ENCODE measurements at regions of chr12 and their contacts with region 1.

Region 1: GRCh38 chr12:45215419-45216229 is at the start of gene ANO6:
- DNase-seq: peak; percentile 75 to 87 (median 78)
- H3K4me3 ChIP-seq: peak within 1 kb of the TSS; percentile 74 to 94 (median 92)
- H3K4me3 Mint-ChIP-seq: peak within 1 kb of the TSS; percentile 99
- H3K27ac ChIP-seq: peak within 1 kb of the TSS; percentile 73 to 89
- H3K27ac Mint-ChIP-seq: peak within 1 kb of the TSS; percentile 87 to 96 (median 94)
- H3K4me1 ChIP-seq: peaks cover 36 to 44% of the 10 kb centered on the region in 2 donors
- H3K4me1 Mint-ChIP-seq: peaks cover 58% of the 10 kb centered on the region
- H3K27me3 ChIP-seq: no peaks in the 10 kb centered on the region
- H3K27me3 Mint-ChIP-seq: peaks cover 0 to 5% (median 2%) of the 10 kb centered on the region in 3 donors
- CTCF ChIP-seq: peak; percentile 23
- polyA plus RNA-seq, gene ANO6: 20.2 to 48.7 (median 34.1) TPM

Region 2: GRCh38 chr12:45166056-45166455 is 49.6 kb before region 1 on chr12:
- intact Hi-C with region 1: loop called in 1 of 2 experiments (anchors 10 kb)
- DNase-seq: no peak
- H3K4me3 ChIP-seq: no peak overlapping the region
- H3K4me3 Mint-ChIP-seq: no peak overlapping the region
- H3K27ac ChIP-seq: no peak overlapping the region
- H3K27ac Mint-ChIP-seq: no peak overlapping the region
- H3K4me1 ChIP-seq: no peaks in the 10 kb centered on the region
- H3K4me1 Mint-ChIP-seq: peaks cover 7% of the 10 kb centered on the region
- H3K27me3 ChIP-seq: no peaks in the 10 kb centered on the region
- H3K27me3 Mint-ChIP-seq: peaks cover 2 to 8% (median 4%) of the 10 kb centered on the region in 3 donors
- CTCF ChIP-seq: no peak

Region 3: GRCh38 chr12:45183246-45183645 is 32.4 kb before region 1 on chr12:
- intact Hi-C with region 1: loop called (anchors 5 kb)
- DNase-seq: no peak
- H3K4me3 ChIP-seq: no peak overlapping the region
- H3K4me3 Mint-ChIP-seq: no peak overlapping the region
- H3K27ac ChIP-seq: no peak overlapping the region
- H3K27ac Mint-ChIP-seq: no peak overlapping the region
- H3K4me1 ChIP-seq: peaks cover 32 to 34% of the 10 kb centered on the region in 2 donors
- H3K4me1 Mint-ChIP-seq: peaks cover 39% of the 10 kb centered on the region
- H3K27me3 ChIP-seq: no peaks in the 10 kb centered on the region
- H3K27me3 Mint-ChIP-seq: peaks cover 0 to 3% (median 0%) of the 10 kb centered on the region in 3 donors
- CTCF ChIP-seq: peak; percentile 37

Region 4: DNA sequence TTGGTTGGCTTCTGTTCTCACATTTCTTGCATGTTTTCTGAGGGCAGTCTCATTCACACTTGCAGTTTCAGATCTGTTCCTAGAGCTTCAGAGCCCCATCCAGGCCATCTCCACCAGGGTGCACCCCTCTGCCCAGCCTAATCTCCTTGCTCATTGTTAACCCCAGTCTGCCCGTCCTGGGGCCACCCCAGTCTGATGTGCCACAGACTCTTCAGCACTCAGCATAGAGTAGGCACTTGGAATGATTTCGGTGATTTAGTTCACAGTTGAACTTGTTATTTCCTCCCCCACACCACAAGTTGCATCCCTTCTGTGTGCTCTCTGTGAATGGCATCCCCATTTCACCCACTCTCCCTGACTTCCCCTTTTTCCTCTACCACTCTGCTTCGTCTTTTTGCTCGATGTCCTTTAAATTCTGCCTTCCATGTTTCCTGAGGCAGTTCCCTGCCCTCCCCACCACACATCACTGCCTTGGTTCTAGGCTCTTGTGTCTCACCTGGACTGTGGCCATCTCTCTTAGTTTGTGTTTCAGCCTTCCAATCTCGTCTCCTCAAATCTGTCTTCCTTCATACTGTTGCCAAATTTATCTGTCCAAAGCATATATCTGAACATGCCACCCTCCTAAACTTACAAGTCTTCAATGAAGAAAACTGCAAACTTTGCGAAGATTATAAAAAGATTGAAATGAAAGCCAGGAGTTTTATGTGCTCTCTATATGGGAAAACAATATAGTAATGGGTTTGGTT is 41.7 kb after region 1 on chr12:
- intact Hi-C with region 1: loop called in 1 of 2 experiments (anchors 5 kb)
- DNase-seq: peak; percentile 37 to 50 (median 44)
- H3K4me3 ChIP-seq: peak overlapping the region in 1 of 3 experiments; percentile 1
- H3K4me3 Mint-ChIP-seq: peak overlapping the region; percentile 44 to 73
- H3K27ac ChIP-seq: peak overlapping the region in 1 of 2 donors; percentile 42
- H3K27ac Mint-ChIP-seq: peak overlapping the region in 6 of 7 donors; percentile 1 to 78 (median 70)
- H3K4me1 ChIP-seq: peaks cover 19 to 21% of the 10 kb centered on the region in 2 donors
- H3K4me1 Mint-ChIP-seq: peaks cover 31% of the 10 kb centered on the region
- H3K27me3 ChIP-seq: no peaks in the 10 kb centered on the region
- H3K27me3 Mint-ChIP-seq: peaks cover 0 to 3% (median 0%) of the 10 kb centered on the region in 3 donors
- CTCF ChIP-seq: no peak

Region 5: DNA sequence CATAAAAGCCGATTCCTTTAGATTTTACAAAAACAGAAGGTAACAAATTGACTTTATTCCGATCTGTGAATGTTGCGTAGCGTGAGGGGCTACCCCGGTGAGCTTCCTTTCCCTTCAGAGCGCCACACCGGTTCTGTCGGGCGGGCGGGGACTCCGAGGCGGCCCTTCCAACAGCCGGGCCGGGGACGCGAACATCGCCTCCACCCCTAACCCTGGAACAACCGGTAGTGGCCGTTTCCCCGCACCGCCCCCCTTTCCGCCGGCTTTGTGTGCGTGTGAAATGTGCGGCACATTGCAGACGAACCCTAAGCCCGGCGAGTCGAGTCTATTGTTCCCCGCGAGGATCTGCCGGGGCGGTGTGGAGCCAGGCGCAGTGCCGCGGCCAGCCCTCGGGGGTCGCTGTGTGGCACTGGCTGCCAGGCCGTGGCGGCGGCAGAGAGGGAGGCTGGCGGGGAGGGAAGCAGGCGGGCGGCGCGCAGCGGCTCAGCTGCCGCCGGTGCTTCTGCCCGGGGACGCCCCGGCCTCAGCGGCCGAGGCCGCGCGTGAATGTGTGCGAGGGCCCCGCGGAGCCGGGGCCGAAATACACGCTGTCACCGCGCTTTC is 513.1 kb after region 1 on chr12:
- intact Hi-C with region 1: loop called in 1 of 2 experiments (anchors 10 kb)
- DNase-seq: peak; percentile 90 to 96 (median 93)
- H3K4me3 ChIP-seq: peak overlapping the region; percentile 65 to 98 (median 73)
- H3K4me3 Mint-ChIP-seq: peak overlapping the region; percentile 98 to 99
- H3K27ac ChIP-seq: peak overlapping the region; percentile 98
- H3K27ac Mint-ChIP-seq: peak overlapping the region; percentile 98 to 99 (median 98)
- H3K4me1 ChIP-seq: peaks cover 29 to 58% of the 10 kb centered on the region in 2 donors
- H3K4me1 Mint-ChIP-seq: peaks cover 39% of the 10 kb centered on the region
- H3K27me3 ChIP-seq: no peaks in the 10 kb centered on the region
- H3K27me3 Mint-ChIP-seq: no peaks in the 10 kb centered on the region
- CTCF ChIP-seq: peak; percentile 98

Measured in CD14-positive monocyte (primary cell).